B cell (primary cell): ENCODE measurements at regions of chr6 and their contacts with region 1.

Region 1: DNA sequence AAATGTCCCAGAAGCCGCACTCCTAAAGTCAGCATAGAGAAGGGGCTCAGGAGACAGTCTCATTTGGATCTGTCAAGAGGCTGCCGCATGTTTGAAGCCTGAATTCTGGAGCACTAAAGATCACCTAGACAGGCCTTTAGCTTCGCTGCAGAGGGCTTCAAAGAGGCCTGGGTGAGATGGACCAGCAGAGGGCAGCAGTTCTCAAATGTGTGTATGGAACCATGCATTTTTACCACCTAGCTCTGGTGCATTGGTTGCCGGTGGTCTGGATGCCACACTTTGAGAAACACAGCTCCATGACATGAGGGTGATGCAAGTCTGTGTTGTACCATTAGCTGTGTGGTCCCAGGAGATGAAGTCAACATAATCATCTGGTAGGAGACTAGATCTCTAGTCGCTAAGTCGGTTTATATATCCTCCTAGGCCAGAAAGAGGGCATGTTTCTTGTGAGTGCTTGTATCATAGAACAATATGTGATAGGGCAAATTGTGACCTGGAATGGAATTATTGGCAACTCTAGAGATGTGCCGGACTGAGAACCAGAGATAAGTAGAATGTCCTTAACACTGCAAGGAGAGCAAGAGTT is 64.8 kb downstream of the KIAA0319 start:
- DNase-seq: peak; percentile 81
- ATAC-seq: peak; percentile 87
- H3K4me3 ChIP-seq: no peak overlapping the region
- H3K4me3 Mint-ChIP-seq: no peak overlapping the region
- H3K27ac ChIP-seq: no peak overlapping the region
- H3K27ac Mint-ChIP-seq: no peak overlapping the region
- H3K4me1 ChIP-seq: peaks cover 3 to 5% of the 10 kb centered on the region in 2 donors
- H3K4me1 Mint-ChIP-seq: peaks cover 4% of the 10 kb centered on the region
- H3K27me3 ChIP-seq: no peaks in the 10 kb centered on the region
- H3K27me3 Mint-ChIP-seq: no peaks in the 10 kb centered on the region
- CTCF ChIP-seq: peak; percentile 86

Region 2: GRCh38 chr6:24494821-24495795 is 86.1 kb before region 1 on chr6 and contains the start of gene ALDH5A1:
- CTCF ChIA-PET with region 1: interaction called, 62 read pairs
- POLR2A ChIA-PET with region 1: no interaction called
- intact Hi-C with region 1: loop called (anchors 2 kb)
- DNase-seq: peak; percentile 85
- ATAC-seq: peak; percentile 67
- H3K4me3 ChIP-seq: peak within 1 kb of the TSS; percentile 41 to 82 (median 57)
- H3K4me3 Mint-ChIP-seq: peak within 1 kb of the TSS; percentile 90
- H3K27ac ChIP-seq: peak within 1 kb of the TSS; percentile 61 to 69
- H3K27ac Mint-ChIP-seq: peak within 1 kb of the TSS; percentile 94
- H3K4me1 ChIP-seq: peaks cover 17 to 18% of the 10 kb centered on the region in 2 donors
- H3K4me1 Mint-ChIP-seq: peaks cover 30% of the 10 kb centered on the region
- H3K27me3 ChIP-seq: no peaks in the 10 kb centered on the region
- H3K27me3 Mint-ChIP-seq: no peaks in the 10 kb centered on the region
- CTCF ChIP-seq: peak; percentile 46
- total RNA-seq, gene ALDH5A1: 26.3 and 28.3 TPM in 2 replicates

Region 3: GRCh38 chr6:24595512-24596217 is 14.5 kb after region 1 on chr6:
- CTCF ChIA-PET with region 1: interaction called, 41 read pairs
- POLR2A ChIA-PET with region 1: no interaction called
- intact Hi-C with region 1: no loop called
- DNase-seq: no peak
- ATAC-seq: no peak
- H3K4me3 ChIP-seq: no peak overlapping the region
- H3K4me3 Mint-ChIP-seq: no peak overlapping the region
- H3K27ac ChIP-seq: no peak overlapping the region
- H3K27ac Mint-ChIP-seq: no peak overlapping the region
- H3K4me1 ChIP-seq: no peaks in the 10 kb centered on the region
- H3K4me1 Mint-ChIP-seq: no peaks in the 10 kb centered on the region
- H3K27me3 ChIP-seq: no peaks in the 10 kb centered on the region
- H3K27me3 Mint-ChIP-seq: no peaks in the 10 kb centered on the region
- CTCF ChIP-seq: no peak

Region 4: GRCh38 chr6:24689964-24690363 is 108.8 kb after region 1 on chr6:
- CTCF ChIA-PET with region 1: interaction called, 156 read pairs
- POLR2A ChIA-PET with region 1: no interaction called
- intact Hi-C with region 1: loop called (anchors 1 kb)
- DNase-seq: no peak
- ATAC-seq: no peak
- H3K4me3 ChIP-seq: no peak overlapping the region
- H3K4me3 Mint-ChIP-seq: no peak overlapping the region
- H3K27ac ChIP-seq: no peak overlapping the region
- H3K27ac Mint-ChIP-seq: no peak overlapping the region
- H3K4me1 ChIP-seq: no peaks in the 10 kb centered on the region
- H3K4me1 Mint-ChIP-seq: no peaks in the 10 kb centered on the region
- H3K27me3 ChIP-seq: no peaks in the 10 kb centered on the region
- H3K27me3 Mint-ChIP-seq: no peaks in the 10 kb centered on the region
- CTCF ChIP-seq: no peak

Region 5: DNA sequence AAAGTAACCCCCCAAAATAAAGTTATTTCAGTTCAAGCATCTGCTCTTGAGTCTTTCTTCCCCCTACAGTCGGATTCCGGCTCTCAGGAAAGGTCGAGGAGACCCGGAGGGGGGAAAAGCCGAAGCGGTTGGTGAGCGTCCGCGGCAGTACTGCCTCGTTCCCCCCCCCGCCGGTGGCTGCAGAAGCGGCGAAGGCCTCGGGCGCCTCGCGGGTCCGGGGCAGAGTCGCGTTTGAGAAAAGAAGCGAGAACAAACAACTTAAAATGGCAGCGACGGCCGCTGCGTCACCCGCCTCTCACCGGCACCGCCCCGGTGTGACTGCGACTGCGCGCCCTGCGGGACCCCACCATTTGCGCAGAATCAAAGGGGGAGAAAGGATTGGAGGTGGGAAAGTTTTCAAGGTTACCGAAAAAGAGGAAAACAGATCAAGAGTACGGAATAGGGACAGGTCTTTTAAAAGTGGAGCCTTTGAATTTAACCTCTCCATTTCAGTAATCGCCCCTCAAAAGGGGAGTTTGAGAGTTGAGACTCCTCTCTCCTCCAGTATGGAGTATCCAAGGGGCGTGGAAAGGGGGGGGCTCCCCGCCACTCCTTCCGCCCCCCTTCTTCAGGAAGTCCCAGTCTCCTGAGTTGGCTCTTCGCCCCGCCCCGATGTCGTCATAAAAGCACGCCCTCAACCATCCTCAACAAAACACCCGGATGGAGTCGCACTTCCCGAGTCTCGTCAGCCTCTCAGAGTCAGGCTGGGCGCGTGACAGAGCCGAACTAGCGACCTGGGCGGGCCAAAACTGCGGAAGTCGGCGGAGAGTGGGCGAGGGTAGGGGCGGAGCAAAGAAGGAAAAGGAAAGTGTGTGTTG is 139.7 kb after region 1 on chr6:
- CTCF ChIA-PET with region 1: interaction called, 11 read pairs
- POLR2A ChIA-PET with region 1: no interaction called
- intact Hi-C with region 1: no loop called
- DNase-seq: peak; percentile 100
- ATAC-seq: peak; percentile 80
- H3K4me3 ChIP-seq: peak overlapping the region; percentile 87 to 99 (median 88)
- H3K4me3 Mint-ChIP-seq: peak overlapping the region; percentile 89
- H3K27ac ChIP-seq: peak overlapping the region; percentile 99
- H3K27ac Mint-ChIP-seq: peak overlapping the region; percentile 100
- H3K4me1 ChIP-seq: peaks cover 40 to 41% of the 10 kb centered on the region in 2 donors
- H3K4me1 Mint-ChIP-seq: peaks cover 46% of the 10 kb centered on the region
- H3K27me3 ChIP-seq: no peaks in the 10 kb centered on the region
- H3K27me3 Mint-ChIP-seq: no peaks in the 10 kb centered on the region
- CTCF ChIP-seq: no peak

Region 6: DNA sequence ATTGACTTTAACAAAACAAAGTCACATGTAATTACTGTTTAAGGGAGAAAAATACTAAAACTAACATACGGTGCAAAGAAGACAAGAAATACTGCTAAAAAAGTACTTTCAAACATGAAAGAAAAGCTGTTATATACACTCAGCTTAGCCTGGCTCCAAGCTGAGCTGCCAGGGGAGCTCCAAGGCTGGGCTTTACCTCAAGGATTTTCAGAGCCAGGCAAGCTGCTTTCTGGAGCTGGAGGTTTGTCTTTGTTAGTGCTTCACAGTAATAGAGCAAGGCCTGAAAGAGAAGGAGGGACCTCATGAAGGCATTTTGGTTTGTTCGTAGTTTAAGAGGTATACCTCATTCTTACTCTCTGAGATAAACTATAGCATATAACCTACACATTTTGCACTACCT is 237.2 kb after region 1 on chr6:
- CTCF ChIA-PET with region 1: no interaction called
- POLR2A ChIA-PET with region 1: no interaction called
- intact Hi-C with region 1: no loop called
- DNase-seq: no peak
- ATAC-seq: no peak
- H3K4me3 ChIP-seq: no peak overlapping the region
- H3K4me3 Mint-ChIP-seq: no peak overlapping the region
- H3K27ac ChIP-seq: no peak overlapping the region
- H3K27ac Mint-ChIP-seq: no peak overlapping the region
- H3K4me1 ChIP-seq: no peaks in the 10 kb centered on the region
- H3K4me1 Mint-ChIP-seq: peaks cover under 1% of the 10 kb centered on the region
- H3K27me3 ChIP-seq: no peaks in the 10 kb centered on the region
- H3K27me3 Mint-ChIP-seq: no peaks in the 10 kb centered on the region
- CTCF ChIP-seq: no peak

Region 7: GRCh38 chr6:24831771-24832716 is 250.9 kb after region 1 on chr6:
- CTCF ChIA-PET with region 1: no interaction called
- POLR2A ChIA-PET with region 1: no interaction called
- intact Hi-C with region 1: no loop called
- DNase-seq: no peak
- ATAC-seq: no peak
- H3K4me3 ChIP-seq: no peak overlapping the region
- H3K4me3 Mint-ChIP-seq: no peak overlapping the region
- H3K27ac ChIP-seq: peak overlapping the region in 1 of 2 donors; percentile 42
- H3K27ac Mint-ChIP-seq: peak overlapping the region; percentile 46
- H3K4me1 ChIP-seq: no peaks in the 10 kb centered on the region
- H3K4me1 Mint-ChIP-seq: peaks cover 5% of the 10 kb centered on the region
- H3K27me3 ChIP-seq: no peaks in the 10 kb centered on the region
- H3K27me3 Mint-ChIP-seq: no peaks in the 10 kb centered on the region
- CTCF ChIP-seq: no peak

Region 8: DNA sequence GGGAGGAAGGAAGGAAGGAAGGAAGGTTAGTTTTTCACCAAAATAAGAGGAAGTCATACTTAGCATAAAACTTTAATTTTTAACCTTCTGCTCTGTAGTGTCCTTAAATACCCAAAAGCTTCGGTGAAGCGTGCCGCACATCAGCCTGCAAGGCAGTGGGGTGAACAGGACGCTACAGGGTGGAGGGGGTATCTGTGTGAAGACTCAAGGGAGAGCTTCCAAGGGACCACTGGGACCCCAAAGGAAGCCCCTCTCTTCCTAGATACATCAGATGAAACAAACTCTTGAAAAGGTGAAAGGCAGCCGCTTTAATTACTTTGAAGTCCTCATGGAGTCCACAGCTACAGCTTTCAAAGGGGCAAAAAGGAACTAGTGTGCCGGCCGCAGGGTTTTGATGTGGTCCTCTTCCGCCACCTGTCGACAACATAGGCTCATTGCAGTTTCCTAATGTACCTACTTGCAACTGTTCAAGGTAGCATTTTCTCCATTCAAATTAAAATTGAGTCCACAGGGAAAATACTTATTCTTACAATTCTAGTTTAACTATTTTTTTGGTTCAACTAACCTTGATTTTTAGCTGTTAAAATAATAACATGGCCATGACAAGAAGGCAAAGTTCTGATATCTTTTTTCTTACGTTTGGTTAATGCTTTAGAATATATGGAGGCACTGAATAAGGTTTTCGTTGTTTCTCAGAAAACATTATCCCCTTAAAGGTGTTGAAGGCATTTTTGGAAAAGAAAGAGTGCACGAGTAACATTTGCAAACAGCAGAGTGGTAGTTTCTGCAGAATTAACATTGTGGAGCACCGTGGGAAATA is 489.6 kb after region 1 on chr6:
- CTCF ChIA-PET with region 1: interaction called, 11 read pairs
- POLR2A ChIA-PET with region 1: no interaction called
- intact Hi-C with region 1: no loop called
- DNase-seq: peak; percentile 93
- ATAC-seq: peak; percentile 97
- H3K4me3 ChIP-seq: peak overlapping the region in 4 of 5 experiments; percentile 31 to 72 (median 48)
- H3K4me3 Mint-ChIP-seq: peak overlapping the region; percentile 86
- H3K27ac ChIP-seq: peak overlapping the region; percentile 74 to 80
- H3K27ac Mint-ChIP-seq: peak overlapping the region; percentile 97
- H3K4me1 ChIP-seq: peaks cover 0 to 4% of the 10 kb centered on the region in 2 donors
- H3K4me1 Mint-ChIP-seq: peaks cover 9% of the 10 kb centered on the region
- H3K27me3 ChIP-seq: no peaks in the 10 kb centered on the region
- H3K27me3 Mint-ChIP-seq: no peaks in the 10 kb centered on the region
- CTCF ChIP-seq: peak; percentile 95